ENCODE measurements at regions of chrX and their contacts with region 1.

Region 1: DNA sequence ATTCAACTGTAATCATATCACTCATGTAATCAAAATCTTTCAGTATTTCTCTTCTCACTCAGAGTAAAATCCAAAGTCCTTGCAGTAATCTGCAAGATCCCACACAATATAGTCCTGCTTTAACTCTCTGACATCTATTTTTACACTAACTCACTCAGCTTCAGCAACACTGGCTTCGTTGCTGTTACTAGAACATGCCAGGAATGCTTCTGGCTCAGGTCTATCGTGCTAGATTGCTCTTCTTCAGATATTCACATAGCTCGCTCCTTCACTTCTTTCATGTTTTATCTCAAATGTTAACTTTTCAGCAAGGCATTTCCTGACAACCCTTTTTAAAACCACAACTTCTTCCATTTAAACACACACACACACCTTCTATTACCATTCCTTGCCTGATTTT is 331.7 kb upstream of the HTR2C start:
- DNase-seq: no peak
- H3K4me3 Mint-ChIP-seq: no peak overlapping the region
- H3K27ac Mint-ChIP-seq: no peak overlapping the region
- H3K4me1 Mint-ChIP-seq: no peaks in the 10 kb centered on the region
- H3K27me3 Mint-ChIP-seq: no peaks in the 10 kb centered on the region

Region 2: DNA sequence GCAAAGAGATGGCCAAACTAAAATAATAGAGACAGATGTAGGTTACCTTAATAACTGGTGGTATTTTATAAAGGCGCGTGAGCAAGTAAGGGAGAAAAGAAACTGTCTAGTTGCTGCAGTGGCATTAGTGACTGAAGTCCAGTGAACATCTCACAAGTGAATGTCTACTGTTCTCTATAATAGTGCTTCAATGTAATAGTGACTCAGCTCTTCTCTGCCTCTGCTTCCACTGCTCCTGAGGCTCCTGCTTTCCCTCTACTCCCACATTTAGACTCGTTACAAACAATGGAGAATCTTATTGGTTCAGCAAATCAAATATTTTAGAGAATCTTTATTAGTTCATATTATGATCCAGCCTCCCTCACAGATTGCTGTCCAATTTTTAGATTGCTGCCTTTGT is 447.4 kb before region 1 on chrX:
- CTCF ChIA-PET with region 1: no interaction called
- intact Hi-C with region 1: loop called (anchors 5 kb)
- DNase-seq: no peak
- H3K4me3 Mint-ChIP-seq: no peak overlapping the region
- H3K27ac Mint-ChIP-seq: no peak overlapping the region
- H3K4me1 Mint-ChIP-seq: no peaks in the 10 kb centered on the region
- H3K27me3 Mint-ChIP-seq: no peaks in the 10 kb centered on the region